Heart right ventricle (tissue), 16 donors: ENCODE measurements at regions of chr10 and their contacts with region 1.

Region 1: GRCh38 chr10:60444494-60445064 is 54.9 kb upstream of the ANK3 start:
- DNase-seq: no peak
- ATAC-seq: no peak
- H3K4me3 ChIP-seq: no peak overlapping the region
- H3K27ac ChIP-seq: no peak overlapping the region
- H3K4me1 ChIP-seq: peaks cover 0 to 20% (median 10%) of the 10 kb centered on the region in 9 donors
- H3K27me3 ChIP-seq: no peaks in the 10 kb centered on the region
- CTCF ChIP-seq: peak in 8 of 9 donors; percentile 40 to 76 (median 65)

Region 2: GRCh38 chr10:60414805-60415585 is 29.6 kb before region 1 on chr10:
- intact Hi-C with region 1: no loop called
- DNase-seq: no peak
- ATAC-seq: no peak
- H3K4me3 ChIP-seq: no peak overlapping the region
- H3K27ac ChIP-seq: no peak overlapping the region
- H3K4me1 ChIP-seq: no peaks in the 10 kb centered on the region
- H3K27me3 ChIP-seq: no peaks in the 10 kb centered on the region
- CTCF ChIP-seq: no peak

Region 3: GRCh38 chr10:60549686-60550085 is 105.1 kb after region 1 on chr10:
- intact Hi-C with region 1: loop called in 1 of 10 experiments (anchors 10 kb)
- DNase-seq: no peak
- ATAC-seq: no peak
- H3K4me3 ChIP-seq: no peak overlapping the region
- H3K27ac ChIP-seq: no peak overlapping the region
- H3K4me1 ChIP-seq: no peaks in the 10 kb centered on the region
- H3K27me3 ChIP-seq: no peaks in the 10 kb centered on the region
- CTCF ChIP-seq: peak in 7 of 9 donors; percentile 9 to 51 (median 25)

Region 4: GRCh38 chr10:60611291-60611747 is 166.7 kb after region 1 on chr10:
- intact Hi-C with region 1: loop called in 1 of 10 experiments (anchors 10 kb)
- DNase-seq: no peak
- ATAC-seq: peak in 2 of 8 donors; percentile 39 to 41
- H3K4me3 ChIP-seq: no peak overlapping the region
- H3K27ac ChIP-seq: no peak overlapping the region
- H3K4me1 ChIP-seq: peaks cover 0 to 7% (median 0%) of the 10 kb centered on the region in 9 donors
- H3K27me3 ChIP-seq: no peaks in the 10 kb centered on the region
- CTCF ChIP-seq: no peak